MCF 10A (cell line): ENCODE measurements at regions of chr13 and their contacts with region 1.

Region 1: DNA sequence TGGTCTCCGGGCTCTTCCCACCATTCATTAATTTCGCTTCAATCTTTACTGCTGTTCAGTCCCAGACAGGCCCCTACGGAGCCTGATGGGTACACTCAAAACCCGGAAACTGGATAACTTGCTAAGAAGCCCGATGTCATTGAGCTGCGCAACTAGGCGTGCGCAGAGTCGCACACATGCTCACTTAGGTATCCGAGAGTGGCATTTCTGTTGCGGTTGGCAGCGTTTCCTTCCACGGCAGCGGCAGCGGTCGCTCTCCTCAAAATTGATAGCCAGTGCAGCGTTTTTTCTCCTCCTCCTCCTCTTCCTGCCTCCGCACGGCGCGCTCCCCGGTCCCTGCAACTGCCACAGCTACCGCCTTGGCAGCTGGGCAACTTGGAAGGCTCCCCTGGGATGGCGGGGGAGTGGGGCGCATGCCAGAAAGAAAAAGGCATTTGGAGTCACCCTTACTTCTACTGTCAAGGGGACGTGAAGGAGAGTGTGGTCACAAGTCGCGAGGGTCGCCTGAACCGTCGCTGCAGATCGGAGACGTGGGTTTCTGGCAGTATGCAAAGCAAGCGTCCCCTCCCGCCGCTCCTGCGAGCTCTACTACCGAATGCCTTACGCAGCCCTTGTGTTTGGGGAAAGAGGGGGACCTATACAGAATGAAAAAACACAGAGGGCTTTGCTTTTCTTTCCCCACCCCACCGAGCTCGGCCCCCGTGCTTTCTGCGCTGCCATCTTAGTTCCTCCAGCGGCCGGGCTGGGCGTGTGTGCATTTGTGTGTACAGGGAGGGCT is 2.4 kb upstream of the MYCBP2 start:
- DNase-seq: peak; percentile 93
- H3K4me3 Mint-ChIP-seq: peak overlapping the region; percentile 97
- H3K27ac Mint-ChIP-seq: peak overlapping the region; percentile 47
- H3K4me1 Mint-ChIP-seq: peaks cover 11% of the 10 kb centered on the region
- H3K27me3 Mint-ChIP-seq: peaks cover 7% of the 10 kb centered on the region
- CTCF ChIP-seq: no peak

Region 2: DNA sequence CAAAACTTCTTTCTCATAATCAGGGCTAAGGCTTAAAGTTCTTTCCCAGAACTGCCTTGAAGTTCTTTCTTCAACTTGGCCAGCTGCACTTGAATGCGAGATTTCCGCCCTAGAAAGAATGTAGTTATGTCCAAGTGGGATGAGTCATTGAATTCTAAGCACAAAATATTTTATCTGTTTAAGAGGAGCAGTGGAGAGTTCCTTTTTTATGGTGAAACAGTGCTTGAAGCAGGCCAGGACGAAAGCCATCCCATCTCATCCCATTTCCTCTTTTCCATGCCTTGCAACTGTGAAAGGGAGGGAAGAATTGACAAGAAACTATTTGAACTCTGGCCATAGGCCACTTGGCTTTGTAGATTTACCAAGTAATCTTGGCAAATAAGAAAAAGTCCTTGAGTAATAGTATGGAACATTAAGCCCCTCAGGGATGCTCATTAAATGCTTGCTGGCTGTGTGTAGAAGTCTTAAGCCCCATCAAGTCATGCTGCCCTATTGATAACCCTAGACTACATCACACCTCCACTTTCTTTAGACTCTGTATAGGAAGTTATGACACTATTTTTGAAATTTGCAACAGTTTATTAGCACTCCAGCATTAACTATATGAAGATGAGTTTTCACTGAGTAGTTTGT is 617.7 kb before region 1 on chr13:
- CTCF ChIA-PET with region 1: no interaction called
- POLR2A ChIA-PET with region 1: no interaction called
- intact Hi-C with region 1: no loop called
- DNase-seq: peak; percentile 70
- H3K4me3 Mint-ChIP-seq: no peak overlapping the region
- H3K27ac Mint-ChIP-seq: peak overlapping the region; percentile 46
- H3K4me1 Mint-ChIP-seq: peaks cover 15% of the 10 kb centered on the region
- H3K27me3 Mint-ChIP-seq: no peaks in the 10 kb centered on the region
- CTCF ChIP-seq: no peak

Region 3: GRCh38 chr13:77026818-77027585 is 302.3 kb before region 1 on chr13 and contains the start of gene FBXL3:
- CTCF ChIA-PET with region 1: no interaction called
- POLR2A ChIA-PET with region 1: interaction called, 12 read pairs
- intact Hi-C with region 1: loop called (anchors 2 kb)
- DNase-seq: peak; percentile 87
- H3K4me3 Mint-ChIP-seq: peak within 1 kb of the TSS; percentile 81
- H3K27ac Mint-ChIP-seq: peak within 1 kb of the TSS; percentile 86
- H3K4me1 Mint-ChIP-seq: peaks cover 33% of the 10 kb centered on the region
- H3K27me3 Mint-ChIP-seq: no peaks in the 10 kb centered on the region
- CTCF ChIP-seq: no peak
- total RNA-seq, gene FBXL3: 32.5 and 34.9 TPM in 2 replicates